AG04449 (cell line): ENCODE measurements at regions of chr3 and their contacts with region 1.

Region 1: GRCh38 chr3:69425261-69425660 is 39.4 kb upstream of the FRMD4B start:
- DNase-seq: no peak
- H3K4me3 ChIP-seq: no peak overlapping the region
- CTCF ChIP-seq: peak; percentile 66

Region 2: GRCh38 chr3:69120879-69121464 is 304.3 kb before region 1 on chr3:
- CTCF ChIA-PET with region 1: interaction called, 88 read pairs
- POLR2A ChIA-PET with region 1: no interaction called
- DNase-seq: peak; percentile 31
- H3K4me3 ChIP-seq: no peak overlapping the region
- CTCF ChIP-seq: peak; percentile 85

Region 3: DNA sequence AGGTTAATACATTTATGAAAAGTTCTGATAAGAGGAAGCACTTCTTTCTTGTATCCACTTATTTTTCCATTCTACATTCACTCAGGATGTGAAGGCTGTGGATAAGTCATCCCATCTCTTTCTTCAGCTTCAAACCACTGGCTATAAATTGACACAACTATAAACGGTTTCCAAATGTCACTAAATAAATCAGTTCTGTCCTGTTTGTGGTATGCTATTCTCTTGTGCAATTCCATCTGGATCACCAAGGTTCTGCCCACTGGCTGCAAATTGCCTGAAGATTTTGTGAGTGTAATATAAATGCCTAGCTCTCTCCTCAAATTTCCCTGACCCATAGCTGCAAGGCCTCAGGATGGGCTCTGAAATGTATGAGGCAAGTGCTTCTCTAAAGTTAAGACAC is 295.7 kb before region 1 on chr3:
- CTCF ChIA-PET with region 1: interaction called, 16 read pairs
- POLR2A ChIA-PET with region 1: no interaction called
- DNase-seq: no peak
- H3K4me3 ChIP-seq: no peak overlapping the region
- CTCF ChIP-seq: no peak

Region 4: DNA sequence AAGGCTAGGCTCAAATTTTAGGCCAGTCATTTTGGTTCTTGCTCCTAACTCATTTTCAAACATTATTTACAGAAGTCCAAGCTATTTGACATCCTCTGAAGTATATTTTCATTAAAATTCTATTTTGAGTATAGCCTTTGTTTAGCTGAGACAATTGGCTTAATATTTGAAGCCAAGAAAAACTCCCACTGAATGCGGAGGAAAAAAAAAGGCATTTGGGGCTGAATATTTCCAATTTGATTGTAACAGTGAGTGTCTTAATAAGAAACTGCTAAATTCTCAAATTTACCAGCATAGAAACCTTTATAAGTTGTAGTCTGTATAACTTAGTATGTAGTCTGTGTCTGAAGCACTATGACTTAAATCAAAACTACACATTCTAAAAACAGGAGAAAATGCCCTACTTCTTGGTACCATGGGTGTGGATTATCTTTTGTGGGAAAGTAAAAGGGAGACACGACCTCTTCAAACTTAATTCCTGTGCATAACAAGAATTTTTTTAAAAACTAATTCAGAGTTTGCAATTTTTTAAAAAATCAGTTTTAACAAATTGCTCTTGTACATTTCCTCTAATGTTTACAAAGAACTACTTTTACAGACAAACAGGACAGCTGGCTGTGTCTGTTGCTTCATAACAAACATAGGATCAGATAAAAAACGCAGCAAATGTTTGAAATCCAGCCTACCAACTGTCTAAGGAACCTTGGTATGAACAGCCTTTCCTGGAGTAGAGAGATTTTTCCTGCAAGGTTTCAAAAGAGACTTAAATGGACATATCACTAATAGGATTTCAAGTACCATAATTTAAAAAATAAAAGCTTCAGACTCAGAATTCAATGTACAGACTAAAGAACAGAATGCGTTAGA is 250.2 kb before region 1 on chr3:
- CTCF ChIA-PET with region 1: interaction called, 14 read pairs
- POLR2A ChIA-PET with region 1: no interaction called
- DNase-seq: no peak
- H3K4me3 ChIP-seq: no peak overlapping the region
- CTCF ChIP-seq: no peak

Region 5: GRCh38 chr3:69324362-69325025 is 100.8 kb before region 1 on chr3:
- CTCF ChIA-PET with region 1: interaction called, 14 read pairs
- POLR2A ChIA-PET with region 1: no interaction called
- DNase-seq: no peak
- H3K4me3 ChIP-seq: no peak overlapping the region
- CTCF ChIP-seq: peak; percentile 3

Region 6: GRCh38 chr3:69439643-69440270 is 14.5 kb after region 1 on chr3:
- CTCF ChIA-PET with region 1: interaction called, 11 read pairs
- POLR2A ChIA-PET with region 1: no interaction called
- DNase-seq: no peak
- H3K4me3 ChIP-seq: no peak overlapping the region
- CTCF ChIP-seq: peak; percentile 38